SK-N-SH (cell line): ENCODE measurements at regions of chr1 and their contacts with region 1.

Region 1: DNA sequence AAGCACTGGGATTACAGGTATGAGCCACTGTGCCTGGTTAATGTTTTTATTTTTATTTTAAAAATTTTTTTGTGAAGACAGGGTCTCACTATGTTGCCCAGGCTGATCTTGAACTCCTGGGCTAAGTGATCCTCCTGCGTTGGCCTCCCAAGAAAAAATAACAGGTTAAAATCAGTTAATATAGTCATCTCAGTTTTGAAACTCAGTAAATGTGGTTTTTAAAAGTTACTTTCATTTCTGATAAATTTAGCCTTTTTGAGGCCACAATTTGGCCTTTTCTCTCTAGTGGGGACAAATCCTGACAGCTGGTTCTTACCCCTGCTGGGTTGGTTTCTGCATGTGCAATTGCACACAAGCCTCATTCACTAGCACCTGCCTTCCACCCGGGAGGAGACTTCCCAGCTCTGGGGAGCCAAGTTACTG is 13.3 kb downstream of the PMF1 start:
- DNase-seq: no peak
- H3K4me3 ChIP-seq: no peak overlapping the region
- H3K27ac ChIP-seq: no peak overlapping the region
- H3K4me1 ChIP-seq: no peaks in the 10 kb centered on the region; a peak in 1 of 4 replicates
- H3K27me3 ChIP-seq: no peaks in the 10 kb centered on the region
- CTCF ChIP-seq: no peak
- EP300 ChIP-seq: no peak
- RAD21 ChIP-seq: no peak

Region 2: GRCh38 chr1:156090822-156091188 is 135.3 kb before region 1 on chr1:
- CTCF ChIA-PET with region 1: interaction called, 40 read pairs
- POLR2A ChIA-PET with region 1: interaction called, 3 read pairs
- DNase-seq: peak; percentile 80
- H3K4me3 ChIP-seq: peak overlapping the region in 1 of 2 experiments; percentile 27; a peak in 1 of 4 replicates
- H3K27ac ChIP-seq: no peak overlapping the region
- H3K4me1 ChIP-seq: peaks cover 0 to 4% of the 10 kb centered on the region in 2 experiments; a peak in 2 of 4 replicates
- H3K27me3 ChIP-seq: no peaks in the 10 kb centered on the region
- CTCF ChIP-seq: peak; percentile 84
- EP300 ChIP-seq: no peak
- RAD21 ChIP-seq: peak; percentile 91

Region 3: GRCh38 chr1:156129706-156130581 is 96.2 kb before region 1 on chr1:
- CTCF ChIA-PET with region 1: interaction called, 121 read pairs
- POLR2A ChIA-PET with region 1: no interaction called
- DNase-seq: peak; percentile 90
- H3K4me3 ChIP-seq: peak overlapping the region in 1 of 2 experiments; percentile 30; a peak in 1 of 4 replicates
- H3K27ac ChIP-seq: peak overlapping the region; percentile 94 to 100
- H3K4me1 ChIP-seq: peaks cover 46 to 49% of the 10 kb centered on the region in 2 experiments
- H3K27me3 ChIP-seq: no peaks in the 10 kb centered on the region
- CTCF ChIP-seq: peak; percentile 96
- EP300 ChIP-seq: peak in 1 of 2 experiments; percentile 19; a peak in 1 of 4 replicates
- RAD21 ChIP-seq: peak; percentile 96

Region 4: GRCh38 chr1:156146020-156146768 is 79.9 kb before region 1 on chr1:
- CTCF ChIA-PET with region 1: interaction called, 121 read pairs
- POLR2A ChIA-PET with region 1: interaction called, 3 read pairs
- DNase-seq: peak; percentile 85
- H3K4me3 ChIP-seq: 0 out of 4 replicates have a peak overlapping the region, but pooled peaks of 1 of the 2 experiments have one; percentile 1
- H3K27ac ChIP-seq: peak overlapping the region; percentile 30 to 51; a peak in 2 of 4 replicates
- H3K4me1 ChIP-seq: peaks cover 12 to 15% of the 10 kb centered on the region in 2 experiments
- H3K27me3 ChIP-seq: no peaks in the 10 kb centered on the region
- CTCF ChIP-seq: peak; percentile 75
- EP300 ChIP-seq: no peak; a peak in 1 of 4 replicates
- RAD21 ChIP-seq: peak; percentile 87

Region 5: DNA sequence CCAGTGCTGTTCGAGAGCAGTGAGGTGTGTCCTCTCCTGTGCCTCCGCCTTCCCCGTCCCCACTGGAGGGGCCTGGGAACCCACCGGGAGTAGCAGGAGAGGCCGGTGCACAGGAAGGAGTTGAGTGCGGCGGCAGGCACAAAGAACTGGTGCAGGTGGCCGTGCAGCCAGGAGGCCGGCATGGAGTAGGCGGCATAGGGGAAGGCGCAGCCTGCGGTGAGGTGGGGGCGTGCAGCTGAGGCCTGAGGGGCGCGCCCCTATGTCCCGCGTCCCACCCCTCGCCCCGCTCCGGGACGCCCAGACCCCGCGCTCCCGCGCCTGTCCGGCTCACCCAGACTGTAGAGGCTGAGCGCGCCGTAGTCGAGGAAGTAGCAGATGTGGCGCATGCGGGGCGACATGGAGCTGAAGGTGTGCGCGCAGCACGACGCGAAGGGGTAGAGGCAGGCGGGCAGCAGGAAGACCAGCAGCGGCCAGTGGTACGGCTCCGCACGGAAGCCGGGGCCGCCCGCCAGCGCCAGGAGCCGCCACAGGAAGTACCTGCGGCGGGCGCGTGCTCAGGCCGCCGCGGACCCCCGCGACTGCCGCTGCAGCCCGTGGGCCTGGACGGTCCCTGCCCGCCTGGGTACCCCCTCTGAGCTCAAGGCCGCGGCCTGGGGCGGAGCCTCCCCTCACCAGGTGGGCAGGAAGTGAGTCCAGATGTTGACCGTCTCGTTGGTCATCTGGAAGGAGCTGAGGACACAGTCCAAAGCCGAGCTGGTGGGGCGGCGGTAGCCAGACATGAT is 19.5 kb after region 1 on chr1:
- CTCF ChIA-PET with region 1: interaction called, 26 read pairs
- POLR2A ChIA-PET with region 1: no interaction called
- DNase-seq: peak; percentile 42
- H3K4me3 ChIP-seq: no peak overlapping the region
- H3K27ac ChIP-seq: peak overlapping the region in 1 of 2 experiments; percentile 62; a peak in 1 of 4 replicates
- H3K4me1 ChIP-seq: peaks cover 7 to 57% of the 10 kb centered on the region in 2 experiments; a peak in 2 of 4 replicates
- H3K27me3 ChIP-seq: no peaks in the 10 kb centered on the region
- CTCF ChIP-seq: no peak
- EP300 ChIP-seq: no peak
- RAD21 ChIP-seq: no peak

Region 6: DNA sequence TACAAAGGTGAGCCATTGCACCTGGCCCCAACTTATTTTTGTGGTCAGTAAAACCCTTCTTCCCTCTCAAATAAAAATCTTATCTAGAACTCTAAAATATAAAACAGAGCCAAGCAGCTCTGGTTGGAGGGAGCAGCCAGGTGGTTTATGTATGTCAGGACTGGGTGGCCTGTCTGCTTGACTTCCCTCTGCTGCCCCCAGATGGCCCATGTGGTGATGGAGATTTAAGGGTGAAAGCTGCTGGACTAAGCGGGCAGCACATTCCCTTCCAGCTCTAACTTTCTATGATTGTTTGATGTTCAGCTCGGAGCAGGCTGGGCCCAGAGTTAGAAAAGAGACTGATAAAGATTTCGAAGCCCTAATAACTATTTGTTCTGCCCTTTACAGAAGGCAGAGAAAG is 33.7 kb after region 1 on chr1:
- CTCF ChIA-PET with region 1: interaction called, 35 read pairs
- POLR2A ChIA-PET with region 1: no interaction called
- DNase-seq: peak; percentile 64
- H3K4me3 ChIP-seq: no peak overlapping the region
- H3K27ac ChIP-seq: peak overlapping the region in 1 of 2 experiments; percentile 36; a peak in 2 of 4 replicates
- H3K4me1 ChIP-seq: peaks cover 11 to 27% of the 10 kb centered on the region in 2 experiments; a peak in 3 of 4 replicates
- H3K27me3 ChIP-seq: no peaks in the 10 kb centered on the region
- CTCF ChIP-seq: peak; percentile 32; the same call in 1 of the 2 replicates
- EP300 ChIP-seq: peak in 1 of 2 experiments; percentile 21; a peak in 1 of 4 replicates
- RAD21 ChIP-seq: peak; percentile 79